GM12878 (cell line): ENCODE measurements at regions of chr16 and their contacts with region 1.

Region 1: GRCh38 chr16:71610936-71611871 is 14.8 kb upstream of the MARVELD3 start:
- DNase-seq: peak; percentile 25
- ATAC-seq: peak; percentile 79
- H3K4me3 ChIP-seq: no peak overlapping the region
- H3K27ac ChIP-seq: no peak overlapping the region
- H3K4me1 ChIP-seq: peaks cover 5% of the 10 kb centered on the region; the same call in 1 of the 2 replicates
- H3K27me3 ChIP-seq: no peaks in the 10 kb centered on the region
- CTCF ChIP-seq: peak; percentile 97 to 98 (median 98); a peak in 5 of 6 replicates
- EP300 ChIP-seq: no peak
- POLR2A ChIP-seq: no peak
- RAD21 ChIP-seq: peak; percentile 93

Region 2: GRCh38 chr16:71461686-71462648 is 149.2 kb before region 1 on chr16 and contains the start of gene ZNF23:
- CTCF ChIA-PET with region 1: interaction called, 11 read pairs
- POLR2A ChIA-PET with region 1: no interaction called
- RAD21 ChIA-PET with region 1: interaction called, 8 read pairs
- SMC1A ChIA-PET with region 1: interaction called, 4 read pairs
- in situ Hi-C with region 1: no loop called
- intact Hi-C with region 1: no loop called
- DNase-seq: peak; percentile 39
- ATAC-seq: peak; percentile 98
- H3K4me3 ChIP-seq: peak within 1 kb of the TSS; percentile 90
- H3K27ac ChIP-seq: peak within 1 kb of the TSS; percentile 74
- H3K4me1 ChIP-seq: no peaks in the 10 kb centered on the region
- H3K27me3 ChIP-seq: no peaks in the 10 kb centered on the region
- CTCF ChIP-seq: peak; percentile 9 to 23 (median 22); a peak in 3 of 6 replicates
- EP300 ChIP-seq: no peak
- POLR2A ChIP-seq: peak; percentile 99
- RAD21 ChIP-seq: no peak
- polyA plus RNA-seq, gene ZNF23: 3.6 to 4.8 TPM

Region 3: GRCh38 chr16:71499775-71500364 is 111.3 kb before region 1 on chr16:
- CTCF ChIA-PET with region 1: interaction called, 159 read pairs
- POLR2A ChIA-PET with region 1: no interaction called
- RAD21 ChIA-PET with region 1: interaction called, 82 read pairs
- SMC1A ChIA-PET with region 1: interaction called, 83 read pairs
- in situ Hi-C with region 1: loop called (anchors 5 kb)
- intact Hi-C with region 1: loop called (anchors 1 kb)
- DNase-seq: peak; percentile 28
- ATAC-seq: peak; percentile 88
- H3K4me3 ChIP-seq: no peak overlapping the region
- H3K27ac ChIP-seq: no peak overlapping the region
- H3K4me1 ChIP-seq: no peaks in the 10 kb centered on the region
- H3K27me3 ChIP-seq: no peaks in the 10 kb centered on the region
- CTCF ChIP-seq: peak; percentile 65 to 87 (median 79)
- EP300 ChIP-seq: no peak
- POLR2A ChIP-seq: no peak
- RAD21 ChIP-seq: peak; percentile 89

Region 4: GRCh38 chr16:71537643-71538042 is 73.6 kb before region 1 on chr16:
- CTCF ChIA-PET with region 1: interaction called, 107 read pairs
- POLR2A ChIA-PET with region 1: no interaction called
- RAD21 ChIA-PET with region 1: interaction called, 43 read pairs
- SMC1A ChIA-PET with region 1: interaction called, 52 read pairs
- in situ Hi-C with region 1: no loop called
- intact Hi-C with region 1: loop called (anchors 1 kb)
- DNase-seq: peak; percentile 21
- ATAC-seq: peak; percentile 96
- H3K4me3 ChIP-seq: no peak overlapping the region
- H3K27ac ChIP-seq: no peak overlapping the region
- H3K4me1 ChIP-seq: 0 out of 2 replicates have a peak, but pooled peaks cover 4% of the 10 kb centered on the region
- H3K27me3 ChIP-seq: no peaks in the 10 kb centered on the region
- CTCF ChIP-seq: peak; percentile 84 to 87 (median 86)
- EP300 ChIP-seq: no peak
- POLR2A ChIP-seq: no peak
- RAD21 ChIP-seq: peak; percentile 71

Region 5: GRCh38 chr16:71572497-71573116 is 38.6 kb before region 1 on chr16:
- CTCF ChIA-PET with region 1: interaction called, 312 read pairs
- POLR2A ChIA-PET with region 1: interaction called, 6 read pairs
- RAD21 ChIA-PET with region 1: interaction called, 213 read pairs
- SMC1A ChIA-PET with region 1: interaction called, 17 read pairs
- in situ Hi-C with region 1: no loop called
- intact Hi-C with region 1: no loop called
- DNase-seq: no peak
- ATAC-seq: no peak
- H3K4me3 ChIP-seq: no peak overlapping the region
- H3K27ac ChIP-seq: no peak overlapping the region
- H3K4me1 ChIP-seq: no peaks in the 10 kb centered on the region
- H3K27me3 ChIP-seq: no peaks in the 10 kb centered on the region
- CTCF ChIP-seq: no peak
- EP300 ChIP-seq: no peak
- POLR2A ChIP-seq: no peak
- RAD21 ChIP-seq: no peak

Region 6: GRCh38 chr16:71645453-71645852 is 34.2 kb after region 1 on chr16:
- CTCF ChIA-PET with region 1: interaction called, 18 read pairs
- POLR2A ChIA-PET with region 1: no interaction called
- RAD21 ChIA-PET with region 1: interaction called, 5 read pairs
- SMC1A ChIA-PET with region 1: interaction called, 17 read pairs
- in situ Hi-C with region 1: no loop called
- intact Hi-C with region 1: no loop called
- DNase-seq: no peak
- ATAC-seq: peak; percentile 77
- H3K4me3 ChIP-seq: no peak overlapping the region
- H3K27ac ChIP-seq: no peak overlapping the region
- H3K4me1 ChIP-seq: no peaks in the 10 kb centered on the region
- H3K27me3 ChIP-seq: no peaks in the 10 kb centered on the region
- CTCF ChIP-seq: peak; percentile 48 to 49 (median 48); a peak in 5 of 6 replicates
- EP300 ChIP-seq: no peak
- POLR2A ChIP-seq: no peak
- RAD21 ChIP-seq: peak; percentile 47

Region 7: GRCh38 chr16:71961066-71962039 is 350.1 kb after region 1 on chr16:
- CTCF ChIA-PET with region 1: interaction called, 42 read pairs
- POLR2A ChIA-PET with region 1: no interaction called
- RAD21 ChIA-PET with region 1: interaction called, 30 read pairs
- SMC1A ChIA-PET with region 1: interaction called, 31 read pairs
- in situ Hi-C with region 1: no loop called
- intact Hi-C with region 1: no loop called
- DNase-seq: peak; percentile 52
- ATAC-seq: peak; percentile 96
- H3K4me3 ChIP-seq: no peak overlapping the region
- H3K27ac ChIP-seq: no peak overlapping the region
- H3K4me1 ChIP-seq: peaks cover 9% of the 10 kb centered on the region
- H3K27me3 ChIP-seq: no peaks in the 10 kb centered on the region; a peak in 1 of 4 replicates
- CTCF ChIP-seq: peak; percentile 82 to 96 (median 87)
- EP300 ChIP-seq: no peak
- POLR2A ChIP-seq: no peak
- RAD21 ChIP-seq: peak; percentile 94

Region 8: GRCh38 chr16:72256398-72257054 is 645.3 kb after region 1 on chr16:
- CTCF ChIA-PET with region 1: no interaction called
- POLR2A ChIA-PET with region 1: no interaction called
- RAD21 ChIA-PET with region 1: no interaction called
- SMC1A ChIA-PET with region 1: no interaction called
- in situ Hi-C with region 1: no loop called
- intact Hi-C with region 1: no loop called
- DNase-seq: no peak
- ATAC-seq: no peak
- H3K4me3 ChIP-seq: no peak overlapping the region
- H3K27ac ChIP-seq: no peak overlapping the region
- H3K4me1 ChIP-seq: no peaks in the 10 kb centered on the region
- H3K27me3 ChIP-seq: no peaks in the 10 kb centered on the region
- CTCF ChIP-seq: no peak
- EP300 ChIP-seq: no peak
- POLR2A ChIP-seq: no peak
- RAD21 ChIP-seq: no peak